Activated CD4-positive, alpha-beta T cell treated with anti-CD3 and anti-CD28 coated beads for 36 hours (primary cell): ENCODE measurements at regions of chr1 and their contacts with region 1.

Region 1: GRCh38 chr1:87202922-87203655 is 125.6 kb upstream of the LMO4 start:
- DNase-seq: no peak
- ATAC-seq: no peak
- H3K4me3 Mint-ChIP-seq: no peak overlapping the region
- H3K27ac Mint-ChIP-seq: no peak overlapping the region
- H3K4me1 Mint-ChIP-seq: peaks cover 7% of the 10 kb centered on the region
- H3K27me3 Mint-ChIP-seq: peaks cover 41% of the 10 kb centered on the region

Region 2: GRCh38 chr1:87266284-87266683 is 63.2 kb after region 1 on chr1:
- CTCF ChIA-PET with region 1: no interaction called
- POLR2A ChIA-PET with region 1: no interaction called
- intact Hi-C with region 1: loop called in 1 of 2 experiments (anchors 10 kb)
- DNase-seq: no peak
- ATAC-seq: no peak
- H3K4me3 Mint-ChIP-seq: no peak overlapping the region
- H3K27ac Mint-ChIP-seq: no peak overlapping the region
- H3K4me1 Mint-ChIP-seq: no peaks in the 10 kb centered on the region
- H3K27me3 Mint-ChIP-seq: peaks cover 12% of the 10 kb centered on the region